ENCODE measurements at regions of chr1 and their contacts with region 1.

Region 1: GRCh38 chr1:232630047-232630893 is at the start of gene SIPA1L2:
- DNase-seq: peak; percentile 84
- H3K4me3 Mint-ChIP-seq: peak within 1 kb of the TSS; percentile 79
- H3K27ac Mint-ChIP-seq: no peak within 1 kb of the TSS
- H3K4me1 Mint-ChIP-seq: peaks cover 27% of the 10 kb centered on the region
- H3K27me3 Mint-ChIP-seq: peaks cover 13% of the 10 kb centered on the region
- total RNA-seq, gene SIPA1L2: 2.1 to 2.6 TPM

Region 2: DNA sequence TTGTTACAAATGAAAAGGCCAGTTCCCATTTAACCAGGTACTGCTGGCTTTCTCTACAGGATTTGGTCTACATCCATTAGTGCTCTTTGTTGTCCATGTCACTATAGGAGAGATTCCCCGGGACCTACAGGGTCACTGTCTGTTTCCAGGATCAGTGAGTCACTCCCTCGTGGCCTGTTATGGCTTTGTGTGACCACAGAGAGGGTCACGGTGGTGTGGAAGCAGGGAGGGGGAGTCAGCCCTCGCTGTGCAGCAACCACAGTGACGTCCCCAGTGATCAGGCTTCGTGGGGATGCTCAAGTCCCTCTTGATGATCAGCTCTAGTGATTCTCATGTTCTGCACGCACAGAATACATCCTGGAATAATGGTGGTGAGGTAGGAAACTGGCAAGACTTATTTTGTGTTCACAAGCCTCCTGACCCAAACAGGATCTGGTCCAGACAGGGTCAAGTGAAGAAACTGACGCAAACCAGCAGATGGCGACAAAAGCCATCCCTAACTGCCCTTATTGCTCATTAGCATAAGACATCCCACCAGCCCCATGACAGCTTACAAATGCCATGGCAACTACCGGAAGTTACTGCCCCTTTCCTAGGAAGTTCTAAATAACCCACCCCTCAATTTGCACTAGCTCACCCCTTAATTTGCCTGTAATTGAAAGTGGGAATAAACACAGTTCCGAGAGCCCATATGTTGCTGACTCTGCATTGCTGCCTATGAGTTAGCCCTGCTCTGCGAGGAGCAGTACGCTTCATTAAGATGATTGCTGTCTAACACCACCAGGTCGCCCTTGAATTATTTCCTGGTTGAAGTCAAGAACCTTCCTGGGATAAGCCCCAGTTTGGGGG is 905.2 kb before region 1 on chr1:
- CTCF ChIA-PET with region 1: no interaction called
- intact Hi-C with region 1: loop called (anchors 10 kb)
- DNase-seq: peak; percentile 43
- H3K4me3 Mint-ChIP-seq: no peak overlapping the region
- H3K27ac Mint-ChIP-seq: no peak overlapping the region
- H3K4me1 Mint-ChIP-seq: no peaks in the 10 kb centered on the region
- H3K27me3 Mint-ChIP-seq: no peaks in the 10 kb centered on the region

Region 3: GRCh38 chr1:231866392-231867331 is 763.6 kb before region 1 on chr1:
- CTCF ChIA-PET with region 1: interaction called, 10 read pairs
- intact Hi-C with region 1: loop called (anchors 1 kb)
- DNase-seq: peak; percentile 78
- H3K4me3 Mint-ChIP-seq: no peak overlapping the region
- H3K27ac Mint-ChIP-seq: no peak overlapping the region
- H3K4me1 Mint-ChIP-seq: peaks cover 22% of the 10 kb centered on the region
- H3K27me3 Mint-ChIP-seq: no peaks in the 10 kb centered on the region

Region 4: DNA sequence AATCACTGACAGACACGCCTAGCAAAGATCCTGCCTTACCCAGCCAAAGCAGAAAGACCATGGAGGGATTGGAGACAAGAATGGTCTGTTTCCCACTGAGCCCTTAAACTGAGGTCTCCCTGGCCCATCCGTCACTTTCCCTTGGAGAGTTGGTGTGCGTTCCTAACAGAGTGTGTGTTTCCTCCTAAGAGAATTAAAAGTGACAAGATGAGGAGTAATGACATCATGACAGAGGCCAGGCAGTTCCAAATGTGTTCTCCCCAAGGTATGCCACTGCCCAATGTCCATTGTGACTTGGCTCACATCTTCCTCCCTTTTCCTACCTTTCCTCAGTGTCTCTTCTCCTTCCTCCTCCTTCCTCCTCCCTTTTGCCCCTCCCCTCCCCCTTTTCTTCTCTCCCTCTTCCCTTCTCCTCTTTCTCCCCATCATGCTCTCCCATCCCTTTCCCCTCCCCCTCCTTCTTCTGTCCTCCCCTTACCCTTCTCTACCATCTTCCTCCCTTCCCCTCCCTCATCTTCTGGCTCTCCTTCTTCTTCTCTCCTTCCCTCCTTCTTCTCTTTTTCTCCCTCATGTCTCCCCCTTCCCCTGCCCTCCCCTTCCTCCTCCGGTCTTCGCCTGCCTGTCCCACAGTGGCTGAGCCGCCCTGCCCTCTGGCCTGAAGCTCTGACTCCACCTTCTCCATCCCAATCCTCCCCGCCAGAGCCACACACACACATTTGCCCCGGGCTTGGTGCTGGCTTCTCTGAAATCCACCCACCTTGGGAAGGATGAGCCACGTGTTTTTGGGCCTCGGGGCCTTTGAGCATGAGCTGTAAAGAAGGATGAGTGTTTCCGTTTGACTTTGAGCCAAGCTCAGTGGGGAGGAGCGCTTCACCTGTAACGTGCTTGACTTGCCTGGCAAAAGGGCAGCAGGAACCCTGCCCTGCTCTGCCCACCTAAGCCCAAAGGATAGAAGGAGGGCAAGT is 295.7 kb before region 1 on chr1:
- CTCF ChIA-PET with region 1: interaction called, 5 read pairs
- intact Hi-C with region 1: loop called (anchors 2 kb)
- DNase-seq: peak; percentile 6
- H3K4me3 Mint-ChIP-seq: no peak overlapping the region
- H3K27ac Mint-ChIP-seq: no peak overlapping the region
- H3K4me1 Mint-ChIP-seq: peaks cover 26% of the 10 kb centered on the region
- H3K27me3 Mint-ChIP-seq: peaks cover 25% of the 10 kb centered on the region

Region 5: DNA sequence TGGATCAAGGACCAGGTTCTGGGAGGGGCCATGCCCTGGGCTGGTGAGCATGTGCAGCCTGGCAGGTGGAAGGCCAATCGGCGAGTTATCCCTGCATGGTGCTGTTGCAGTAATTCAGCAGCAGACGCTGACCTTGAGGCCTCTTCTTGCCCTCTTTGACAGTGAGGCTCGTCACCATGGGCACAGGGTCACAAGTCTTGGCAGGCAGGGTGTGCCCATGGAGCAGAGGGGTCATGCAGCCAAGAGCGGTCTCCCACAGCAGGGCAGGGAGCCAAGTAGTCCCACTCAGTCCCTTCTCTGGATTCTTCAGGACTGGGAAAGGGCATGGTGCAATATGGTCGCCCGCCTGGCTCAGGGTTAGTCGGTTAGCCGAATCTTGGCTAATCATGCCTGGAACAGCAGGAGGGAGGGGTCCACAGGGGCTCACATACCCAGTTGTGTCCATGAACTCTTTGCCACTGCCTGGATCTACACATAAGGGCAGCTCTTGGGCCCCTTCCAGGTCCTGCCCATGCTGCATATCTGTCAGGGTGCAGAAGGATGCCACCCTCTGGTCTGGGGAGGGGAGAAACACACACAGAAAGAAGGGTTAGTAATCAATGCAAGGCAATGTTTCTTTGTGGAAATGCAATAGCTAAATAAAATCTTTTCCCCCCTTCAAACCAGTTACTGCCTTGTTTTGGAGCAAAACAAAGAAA is 227.1 kb before region 1 on chr1:
- CTCF ChIA-PET with region 1: no interaction called
- intact Hi-C with region 1: no loop called
- DNase-seq: no peak
- H3K4me3 Mint-ChIP-seq: no peak overlapping the region
- H3K27ac Mint-ChIP-seq: no peak overlapping the region
- H3K4me1 Mint-ChIP-seq: no peaks in the 10 kb centered on the region
- H3K27me3 Mint-ChIP-seq: peaks cover 4% of the 10 kb centered on the region

Region 6: DNA sequence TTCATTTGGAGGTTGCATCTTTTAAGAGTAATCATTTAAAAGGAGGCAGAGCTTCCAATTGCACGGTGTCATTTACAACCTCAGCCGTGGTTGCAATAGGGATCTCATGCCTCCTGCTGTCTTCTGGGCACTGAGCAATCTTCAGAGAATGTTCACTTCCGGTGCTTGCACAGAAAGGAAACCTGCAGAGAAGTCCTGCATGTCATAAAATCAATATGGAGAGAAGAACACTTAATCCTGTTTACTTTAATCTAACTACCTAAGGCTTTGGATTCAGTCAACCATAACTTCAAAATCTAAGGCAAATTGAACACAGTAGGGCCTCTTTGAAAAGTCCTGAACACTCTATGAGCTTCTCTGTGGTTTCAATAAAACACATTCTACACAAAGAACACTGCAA is 163.7 kb after region 1 on chr1:
- CTCF ChIA-PET with region 1: interaction called, 5 read pairs
- intact Hi-C with region 1: loop called (anchors 1 kb)
- DNase-seq: peak; percentile 55
- H3K4me3 Mint-ChIP-seq: no peak overlapping the region
- H3K27ac Mint-ChIP-seq: no peak overlapping the region
- H3K4me1 Mint-ChIP-seq: peaks cover 15% of the 10 kb centered on the region
- H3K27me3 Mint-ChIP-seq: peaks cover 2% of the 10 kb centered on the region

Region 7: GRCh38 chr1:232950197-232951176 is 320.2 kb after region 1 on chr1 and contains the start of gene NTPCR:
- CTCF ChIA-PET with region 1: interaction called, 4 read pairs
- intact Hi-C with region 1: loop called (anchors 2 kb)
- DNase-seq: peak; percentile 96
- H3K4me3 Mint-ChIP-seq: peak within 1 kb of the TSS; percentile 92
- H3K27ac Mint-ChIP-seq: peak within 1 kb of the TSS; percentile 92
- H3K4me1 Mint-ChIP-seq: peaks cover 31% of the 10 kb centered on the region
- H3K27me3 Mint-ChIP-seq: no peaks in the 10 kb centered on the region
- total RNA-seq, gene NTPCR: 53.1 TPM

Region 8: DNA sequence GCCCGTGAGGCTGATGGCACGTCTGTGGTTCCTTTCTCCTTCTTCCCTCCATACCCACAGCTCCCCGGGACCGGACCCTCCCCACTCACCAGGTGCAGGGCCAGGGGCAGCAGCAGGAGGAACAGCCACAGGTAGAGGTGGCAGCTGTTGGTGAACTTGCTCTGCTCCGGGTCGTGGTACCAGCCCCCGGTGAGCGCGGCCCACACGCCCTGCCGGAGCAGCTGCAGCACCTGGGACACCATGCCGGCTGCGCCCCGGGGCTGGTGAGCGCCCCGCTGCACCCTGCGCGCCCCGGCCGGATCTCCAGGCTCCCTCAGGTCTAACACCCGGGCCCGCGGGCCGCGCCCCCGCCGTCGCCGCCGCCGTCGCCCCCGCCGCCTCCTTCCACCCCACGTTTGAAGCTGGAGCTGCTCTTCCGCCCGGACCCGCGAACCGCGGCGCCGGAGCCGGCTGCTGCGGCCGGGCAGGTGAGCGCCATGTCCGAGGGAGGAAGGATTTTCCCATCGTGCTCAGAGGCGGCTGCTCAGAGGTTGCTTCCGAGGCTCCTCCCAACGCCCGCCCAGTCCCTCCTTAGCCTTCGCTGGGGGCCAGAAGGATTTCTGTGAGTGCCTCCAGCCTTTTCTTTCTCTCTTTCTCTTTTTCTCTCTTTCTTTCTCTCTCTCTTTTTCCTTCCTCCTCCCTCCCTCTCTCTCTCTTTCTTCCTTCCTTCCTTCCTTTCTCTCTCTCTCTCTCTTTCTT is 665.1 kb after region 1 on chr1 and contains the start of gene PCNX2:
- CTCF ChIA-PET with region 1: no interaction called
- intact Hi-C with region 1: loop called (anchors 5 kb)
- DNase-seq: peak; percentile 77
- H3K4me3 Mint-ChIP-seq: peak within 1 kb of the TSS; percentile 91
- H3K27ac Mint-ChIP-seq: peak within 1 kb of the TSS; percentile 90
- H3K4me1 Mint-ChIP-seq: peaks cover 25% of the 10 kb centered on the region
- H3K27me3 Mint-ChIP-seq: no peaks in the 10 kb centered on the region
- total RNA-seq, gene PCNX2: 11.5 to 12.2 TPM

Measured in activated naive CD4-positive, alpha-beta T cell treated with anti-CD3 and anti-CD28 coated beads for 36 hours (primary cell).